A673 (cell line): ENCODE measurements at regions of chr11 and their contacts with region 1.

Region 1: GRCh38 chr11:107017433-107018227 is 646 bp downstream of the GUCY1A2 start:
- DNase-seq: peak; percentile 88
- H3K4me3 ChIP-seq: peak overlapping the region; percentile 69
- H3K27ac ChIP-seq: no peak overlapping the region
- H3K4me1 ChIP-seq: peaks cover 16% of the 10 kb centered on the region
- H3K27me3 ChIP-seq: peaks cover 40% of the 10 kb centered on the region
- CTCF ChIP-seq: peak; percentile 90

Region 2: DNA sequence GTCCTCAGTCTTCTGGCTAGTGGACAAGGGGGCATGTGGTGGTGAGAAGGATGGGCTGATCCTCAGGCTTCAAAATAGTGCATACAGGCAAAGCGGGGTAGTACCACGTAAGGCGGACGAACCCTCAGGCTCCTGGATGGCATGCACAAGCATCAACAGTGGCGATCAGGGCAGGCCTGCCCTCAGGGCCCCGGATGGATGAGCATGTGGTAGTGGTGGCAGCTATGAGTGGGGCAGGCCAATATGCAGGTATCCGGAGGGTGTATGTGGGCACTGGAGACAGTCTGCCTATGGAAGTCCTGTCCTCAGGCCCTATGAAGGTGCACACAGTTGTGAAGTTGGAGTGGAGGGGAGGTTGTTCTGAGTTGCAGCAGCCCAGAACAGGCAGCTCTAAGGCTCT is 163.2 kb before region 1 on chr11:
- CTCF ChIA-PET with region 1: no interaction called
- POLR2A ChIA-PET with region 1: no interaction called
- intact Hi-C with region 1: loop called (anchors 5 kb)
- DNase-seq: no peak
- H3K4me3 ChIP-seq: no peak overlapping the region
- H3K27ac ChIP-seq: no peak overlapping the region
- H3K4me1 ChIP-seq: no peaks in the 10 kb centered on the region
- H3K27me3 ChIP-seq: no peaks in the 10 kb centered on the region
- CTCF ChIP-seq: no peak

Region 3: DNA sequence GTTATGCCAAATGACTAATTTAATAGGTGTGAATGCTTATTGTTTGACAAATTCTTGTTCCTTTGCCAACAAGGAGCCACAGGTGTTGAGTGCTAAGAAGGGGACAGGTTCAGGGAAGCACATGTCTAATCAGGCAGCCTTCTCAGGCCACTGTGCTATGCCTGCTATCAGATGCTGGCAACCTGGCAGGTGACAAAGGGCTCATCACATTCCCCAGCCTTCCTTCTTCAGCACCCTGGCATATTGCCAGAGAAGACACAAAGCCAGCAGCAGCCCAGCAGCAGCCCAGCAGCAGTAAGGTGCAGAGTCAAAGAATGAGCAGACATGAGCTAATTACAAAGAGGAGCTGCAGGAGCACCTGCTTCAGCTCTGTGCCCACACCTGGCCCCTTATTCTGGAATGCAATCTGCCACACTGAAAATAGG is 67.6 kb before region 1 on chr11:
- CTCF ChIA-PET with region 1: no interaction called
- POLR2A ChIA-PET with region 1: no interaction called
- intact Hi-C with region 1: no loop called
- DNase-seq: no peak
- H3K4me3 ChIP-seq: no peak overlapping the region
- H3K27ac ChIP-seq: no peak overlapping the region
- H3K4me1 ChIP-seq: no peaks in the 10 kb centered on the region
- H3K27me3 ChIP-seq: no peaks in the 10 kb centered on the region
- CTCF ChIP-seq: no peak